ENCODE measurements at regions of chr3 and their contacts with region 1.

Region 1: DNA sequence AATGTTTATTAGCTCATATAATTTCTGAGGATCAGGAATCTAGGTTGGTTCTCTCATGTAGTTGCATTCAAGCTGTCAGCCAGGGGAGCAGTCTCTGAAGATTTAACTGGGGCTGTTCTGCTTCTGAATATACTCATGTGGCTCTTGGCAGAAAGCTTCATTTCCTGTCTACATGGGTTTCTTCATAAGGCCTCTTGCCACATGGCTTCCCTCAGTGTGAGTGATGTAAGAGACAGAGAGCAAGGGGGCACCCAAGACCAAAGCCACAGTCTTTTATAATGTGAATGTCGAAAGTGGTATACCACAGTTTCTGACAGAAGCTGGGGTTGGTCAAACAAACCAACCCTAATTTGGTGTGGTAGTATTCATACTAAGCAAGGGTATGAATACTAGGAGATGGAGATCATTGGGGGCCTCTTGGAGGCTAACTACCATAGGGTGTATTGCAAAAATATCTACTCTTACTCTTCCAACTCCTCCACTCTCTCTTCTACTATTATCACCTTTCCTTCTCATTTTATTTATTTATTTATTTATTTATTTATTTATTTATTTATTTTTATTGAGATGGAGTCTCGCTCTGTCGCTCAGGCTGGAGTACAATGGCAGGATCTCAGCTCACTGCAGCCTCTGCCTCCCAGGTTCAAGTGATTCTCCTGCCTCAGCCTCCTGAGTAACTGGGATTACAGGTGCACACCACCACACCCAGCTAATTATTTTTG is 123.8 kb downstream of the B3GALNT1 start:
- DNase-seq: peak; percentile 26 to 56
- ATAC-seq: peak; percentile 89 to 96 (median 94)
- H3K4me3 ChIP-seq: no peak overlapping the region
- H3K4me3 Mint-ChIP-seq: peak overlapping the region; percentile 75
- H3K27ac ChIP-seq: peak overlapping the region; percentile 35
- H3K27ac Mint-ChIP-seq: peak overlapping the region; percentile 81 to 92
- H3K4me1 ChIP-seq: peaks cover 20% of the 10 kb centered on the region
- H3K4me1 Mint-ChIP-seq: peaks cover 50 to 51% of the 10 kb centered on the region in 2 donors
- H3K27me3 ChIP-seq: no peaks in the 10 kb centered on the region
- H3K27me3 Mint-ChIP-seq: no peaks in the 10 kb centered on the region
- CTCF ChIP-seq: no peak

Region 2: DNA sequence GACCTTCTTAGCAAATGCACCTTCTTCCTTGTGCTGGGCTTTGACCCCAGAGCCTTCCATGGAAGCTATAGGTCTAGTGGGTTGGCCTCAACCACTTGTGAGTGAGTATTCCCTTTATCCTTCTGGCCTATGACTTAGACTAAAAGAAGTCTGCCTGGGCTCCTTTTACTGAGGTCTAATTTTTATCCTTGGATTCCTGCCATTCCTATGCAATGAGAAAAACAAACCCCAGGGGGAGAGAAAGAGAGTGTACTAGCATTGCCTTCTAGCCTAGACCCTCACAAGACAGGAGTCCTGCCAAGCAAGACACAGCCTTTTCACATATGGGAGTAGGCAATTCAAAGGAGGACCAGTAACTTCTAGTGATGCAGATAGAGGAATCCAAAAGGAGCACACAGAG is 70.0 kb before region 1 on chr3:
- intact Hi-C with region 1: no loop called
- DNase-seq: no peak
- ATAC-seq: no peak
- H3K4me3 ChIP-seq: no peak overlapping the region
- H3K4me3 Mint-ChIP-seq: no peak overlapping the region
- H3K27ac ChIP-seq: no peak overlapping the region
- H3K27ac Mint-ChIP-seq: no peak overlapping the region
- H3K4me1 ChIP-seq: no peaks in the 10 kb centered on the region
- H3K4me1 Mint-ChIP-seq: peaks cover 25 to 34% of the 10 kb centered on the region in 2 donors
- H3K27me3 ChIP-seq: no peaks in the 10 kb centered on the region
- H3K27me3 Mint-ChIP-seq: no peaks in the 10 kb centered on the region
- CTCF ChIP-seq: no peak

Region 3: DNA sequence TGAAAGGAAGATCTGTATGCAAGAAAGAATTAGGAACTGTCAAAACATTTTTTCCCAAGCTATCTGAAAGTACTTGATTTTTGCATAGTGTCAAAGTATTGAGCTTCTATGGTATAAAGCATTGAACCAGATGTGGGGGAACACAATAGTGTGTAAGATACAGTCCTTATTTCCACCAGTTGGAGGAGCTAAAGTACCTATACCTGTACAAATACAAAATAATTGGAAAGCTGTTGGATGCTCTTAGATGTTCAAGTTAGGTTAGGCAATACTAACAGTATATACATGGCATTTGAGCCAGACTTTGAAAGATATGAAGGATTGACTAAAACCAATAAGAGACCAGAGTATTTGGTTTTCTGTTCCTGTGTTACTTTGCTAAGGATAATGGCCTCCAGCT is 24.6 kb before region 1 on chr3:
- intact Hi-C with region 1: no loop called
- DNase-seq: peak in 1 of 2 donors; percentile 8
- ATAC-seq: peak in 1 of 3 donors; percentile 59
- H3K4me3 ChIP-seq: no peak overlapping the region
- H3K4me3 Mint-ChIP-seq: no peak overlapping the region
- H3K27ac ChIP-seq: no peak overlapping the region
- H3K27ac Mint-ChIP-seq: no peak overlapping the region
- H3K4me1 ChIP-seq: no peaks in the 10 kb centered on the region
- H3K4me1 Mint-ChIP-seq: peaks cover 6 to 10% of the 10 kb centered on the region in 2 donors
- H3K27me3 ChIP-seq: no peaks in the 10 kb centered on the region
- H3K27me3 Mint-ChIP-seq: no peaks in the 10 kb centered on the region
- CTCF ChIP-seq: peak; percentile 11

Region 4: DNA sequence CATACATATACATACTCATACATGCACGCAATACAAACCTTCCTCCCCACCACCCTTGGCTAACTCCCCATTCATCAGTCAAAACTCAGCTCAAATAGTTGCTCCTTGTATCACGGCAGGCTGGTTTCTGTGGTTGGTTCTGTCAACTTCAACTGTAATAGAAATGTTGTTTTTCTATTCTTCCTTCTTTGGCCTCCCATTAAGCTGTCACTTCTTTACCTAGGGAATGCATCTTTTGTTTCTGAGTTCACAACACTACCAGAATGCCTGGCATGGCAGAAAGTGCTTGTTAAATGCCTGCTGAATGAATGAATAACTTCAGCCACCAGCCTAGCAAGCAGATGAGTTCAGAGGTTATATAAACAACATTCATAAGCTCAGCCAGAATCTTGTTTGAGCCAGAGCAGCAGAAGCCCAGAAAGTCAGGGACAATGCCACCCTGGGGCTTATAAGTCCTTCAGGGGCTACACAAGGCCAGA is 60.7 kb after region 1 on chr3:
- intact Hi-C with region 1: no loop called
- DNase-seq: no peak
- ATAC-seq: no peak
- H3K4me3 ChIP-seq: no peak overlapping the region
- H3K4me3 Mint-ChIP-seq: no peak overlapping the region
- H3K27ac ChIP-seq: no peak overlapping the region
- H3K27ac Mint-ChIP-seq: no peak overlapping the region
- H3K4me1 ChIP-seq: no peaks in the 10 kb centered on the region
- H3K4me1 Mint-ChIP-seq: peaks cover 0 to 10% of the 10 kb centered on the region in 2 donors
- H3K27me3 ChIP-seq: no peaks in the 10 kb centered on the region
- H3K27me3 Mint-ChIP-seq: no peaks in the 10 kb centered on the region
- CTCF ChIP-seq: no peak

Region 5: DNA sequence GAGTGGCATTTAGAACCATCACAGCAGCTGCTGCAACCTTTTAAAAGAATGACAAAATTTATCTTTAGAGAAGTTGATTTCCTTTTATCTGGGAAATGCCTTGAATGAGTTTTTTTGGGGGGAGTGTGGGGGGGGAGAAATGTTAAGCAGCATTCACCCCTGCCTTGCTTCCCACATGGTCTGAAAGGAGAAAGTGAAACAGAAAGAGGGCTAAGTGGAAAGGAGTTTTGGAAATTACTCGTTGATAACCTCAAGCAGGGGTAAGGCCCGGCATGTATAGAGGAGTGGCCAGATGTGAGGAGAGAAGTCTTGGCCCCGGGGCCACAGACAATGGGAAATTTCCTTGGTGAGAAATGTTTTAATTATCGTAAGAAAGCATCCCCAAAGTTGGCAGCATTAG is 100.3 kb after region 1 on chr3:
- intact Hi-C with region 1: no loop called
- DNase-seq: no peak
- ATAC-seq: no peak
- H3K4me3 ChIP-seq: no peak overlapping the region
- H3K4me3 Mint-ChIP-seq: no peak overlapping the region
- H3K27ac ChIP-seq: no peak overlapping the region
- H3K27ac Mint-ChIP-seq: peak overlapping the region in 1 of 2 donors; percentile 42
- H3K4me1 ChIP-seq: no peaks in the 10 kb centered on the region
- H3K4me1 Mint-ChIP-seq: peaks cover 0 to 12% of the 10 kb centered on the region in 2 donors
- H3K27me3 ChIP-seq: no peaks in the 10 kb centered on the region
- H3K27me3 Mint-ChIP-seq: no peaks in the 10 kb centered on the region
- CTCF ChIP-seq: no peak

Region 6: DNA sequence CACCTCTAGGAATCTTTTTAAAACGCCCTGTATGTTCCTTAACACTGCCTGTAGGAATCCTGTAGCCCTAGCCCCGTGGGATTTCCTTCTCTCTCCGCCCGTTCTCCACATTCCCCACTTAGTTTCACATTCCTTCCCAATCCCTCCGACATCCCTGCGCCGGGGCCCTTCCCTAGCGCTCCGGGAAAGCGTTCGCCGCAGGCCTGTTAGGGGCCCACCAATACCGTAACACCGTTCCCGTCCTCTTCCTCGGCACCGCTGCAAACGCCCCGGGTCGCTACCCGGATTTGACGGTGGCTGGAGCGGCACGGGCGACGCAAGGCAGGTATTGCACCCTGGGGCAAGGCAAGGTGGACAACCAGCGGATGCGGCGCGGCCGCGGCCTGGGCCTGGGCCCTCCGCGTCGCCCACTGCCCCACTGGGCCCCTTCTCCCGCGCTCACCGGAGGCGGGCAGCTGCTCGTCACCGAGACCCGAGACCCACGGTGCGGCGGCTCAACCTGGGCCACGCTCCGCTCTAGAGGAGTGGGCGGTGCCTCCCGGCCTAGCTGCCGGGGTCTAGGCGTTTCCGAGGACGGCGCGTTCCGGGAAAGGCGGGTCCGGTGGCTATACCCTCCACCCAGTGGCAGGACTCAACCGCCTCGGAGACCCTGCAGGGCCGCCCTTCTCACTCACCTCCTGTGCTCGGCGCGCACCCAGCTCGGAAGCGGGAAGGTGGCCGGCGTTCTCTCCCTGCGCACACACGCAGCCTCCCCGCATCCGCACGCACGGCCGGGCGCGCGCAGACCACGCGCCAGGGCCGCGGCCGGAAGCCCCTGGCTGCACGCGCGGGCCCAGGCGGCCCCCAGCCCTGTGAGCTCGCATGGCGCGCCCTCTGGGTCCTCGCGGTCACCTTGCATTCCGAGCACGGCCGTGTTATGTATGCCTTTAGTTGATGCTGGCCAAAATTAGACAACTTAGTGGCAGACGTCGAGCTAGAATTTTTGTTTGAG is 123.5 kb after region 1 on chr3 and contains the start of gene B3GALNT1:
- intact Hi-C with region 1: loop called (anchors 10 kb)
- DNase-seq: peak in 1 of 2 donors; percentile 32
- ATAC-seq: peak; percentile 82 to 84 (median 82)
- H3K4me3 ChIP-seq: peak within 1 kb of the TSS; percentile 53
- H3K4me3 Mint-ChIP-seq: peak within 1 kb of the TSS; percentile 87
- H3K27ac ChIP-seq: no peak within 1 kb of the TSS
- H3K27ac Mint-ChIP-seq: peak within 1 kb of the TSS in 1 of 2 donors; percentile 69
- H3K4me1 ChIP-seq: peaks cover 11% of the 10 kb centered on the region
- H3K4me1 Mint-ChIP-seq: peaks cover 13 to 17% of the 10 kb centered on the region in 2 donors
- H3K27me3 ChIP-seq: no peaks in the 10 kb centered on the region
- H3K27me3 Mint-ChIP-seq: peaks cover 3 to 5% of the 10 kb centered on the region in 2 donors
- CTCF ChIP-seq: no peak
- total RNA-seq, gene B3GALNT1: 2.0 to 4.3 (median 2.5) TPM